Sigmoid colon (tissue), 7 donors: ENCODE measurements at regions of chr13 and their contacts with region 1.

Region 1: DNA sequence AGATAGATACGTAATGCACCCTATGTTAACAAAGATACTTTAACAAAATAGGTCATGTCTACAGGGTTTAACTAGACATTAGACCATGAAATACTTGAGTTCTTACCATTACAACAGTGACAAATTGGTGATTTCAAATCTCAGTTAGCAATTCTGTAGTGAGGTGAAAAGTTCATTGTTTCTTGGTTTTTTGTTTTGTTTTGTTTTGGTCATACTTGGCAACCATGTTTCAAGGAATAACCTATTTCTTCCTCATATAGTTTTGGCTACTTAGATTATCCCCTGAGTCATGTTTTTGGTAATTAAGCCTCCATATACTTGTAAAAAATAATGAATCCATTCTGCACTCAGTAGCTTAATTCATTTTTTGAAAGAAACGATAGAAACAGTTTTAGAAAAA is 1200.4 kb downstream of the DIAPH3 start:
- DNase-seq: no peak
- H3K4me3 ChIP-seq: no peak overlapping the region
- H3K27ac ChIP-seq: no peak overlapping the region
- H3K4me1 ChIP-seq: no peaks in the 10 kb centered on the region
- H3K27me3 ChIP-seq: no peaks in the 10 kb centered on the region
- CTCF ChIP-seq: no peak
- EP300 ChIP-seq: no peak
- POLR2A ChIP-seq: no peak

Region 2: DNA sequence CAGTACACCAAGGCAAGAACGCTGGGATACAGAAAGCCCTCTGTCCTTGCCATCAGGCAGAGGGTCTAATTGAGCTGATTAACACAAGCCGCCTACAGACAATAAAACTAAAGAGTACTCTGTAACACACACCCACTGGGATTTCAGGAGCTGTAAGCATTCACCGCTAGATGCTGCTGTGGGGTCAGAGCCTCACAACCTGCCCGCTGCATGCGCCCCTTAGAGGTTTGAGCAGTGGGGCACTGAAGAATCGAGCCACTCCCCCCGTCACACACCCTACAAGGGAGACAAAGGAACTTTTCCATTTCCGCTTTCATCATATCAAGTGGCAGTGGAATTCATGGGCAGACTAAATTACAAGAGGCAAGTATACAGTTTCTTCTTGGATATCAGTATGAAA is 251.1 kb before region 1 on chr13:
- intact Hi-C with region 1: no loop called
- DNase-seq: no peak
- H3K4me3 ChIP-seq: no peak overlapping the region
- H3K27ac ChIP-seq: no peak overlapping the region
- H3K4me1 ChIP-seq: no peaks in the 10 kb centered on the region
- H3K27me3 ChIP-seq: no peaks in the 10 kb centered on the region
- CTCF ChIP-seq: no peak
- EP300 ChIP-seq: no peak
- POLR2A ChIP-seq: no peak

Region 3: GRCh38 chr13:58792854-58793253 is 170.5 kb before region 1 on chr13:
- intact Hi-C with region 1: no loop called
- DNase-seq: no peak
- H3K4me3 ChIP-seq: no peak overlapping the region
- H3K27ac ChIP-seq: no peak overlapping the region
- H3K4me1 ChIP-seq: no peaks in the 10 kb centered on the region
- H3K27me3 ChIP-seq: no peaks in the 10 kb centered on the region
- CTCF ChIP-seq: no peak
- EP300 ChIP-seq: no peak
- POLR2A ChIP-seq: no peak

Region 4: DNA sequence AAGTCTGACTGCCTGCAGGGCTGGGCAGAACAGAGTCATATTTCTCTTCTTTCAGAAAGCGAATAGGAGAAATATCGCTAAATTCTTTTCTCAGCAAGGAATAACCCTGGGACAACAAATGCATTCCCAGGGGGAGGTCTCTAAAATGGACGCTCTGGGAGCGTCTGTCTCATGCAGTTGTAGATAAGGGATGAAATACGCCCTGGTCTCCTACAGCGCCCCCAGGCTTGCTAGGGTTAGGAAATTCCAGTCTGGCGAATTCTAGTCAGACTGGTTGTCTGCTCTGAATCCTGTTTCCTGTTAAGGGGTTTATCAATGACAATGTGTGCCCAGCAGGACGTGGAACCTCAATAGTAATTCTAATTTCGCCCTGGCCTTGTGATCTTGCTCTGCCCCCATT is 13.7 kb before region 1 on chr13:
- intact Hi-C with region 1: loop called (anchors 2 kb)
- DNase-seq: no peak
- H3K4me3 ChIP-seq: no peak overlapping the region
- H3K27ac ChIP-seq: no peak overlapping the region
- H3K4me1 ChIP-seq: no peaks in the 10 kb centered on the region
- H3K27me3 ChIP-seq: no peaks in the 10 kb centered on the region
- CTCF ChIP-seq: no peak
- EP300 ChIP-seq: no peak
- POLR2A ChIP-seq: no peak